ENCODE measurements at regions of chr18 and their contacts with region 1.

Region 1: DNA sequence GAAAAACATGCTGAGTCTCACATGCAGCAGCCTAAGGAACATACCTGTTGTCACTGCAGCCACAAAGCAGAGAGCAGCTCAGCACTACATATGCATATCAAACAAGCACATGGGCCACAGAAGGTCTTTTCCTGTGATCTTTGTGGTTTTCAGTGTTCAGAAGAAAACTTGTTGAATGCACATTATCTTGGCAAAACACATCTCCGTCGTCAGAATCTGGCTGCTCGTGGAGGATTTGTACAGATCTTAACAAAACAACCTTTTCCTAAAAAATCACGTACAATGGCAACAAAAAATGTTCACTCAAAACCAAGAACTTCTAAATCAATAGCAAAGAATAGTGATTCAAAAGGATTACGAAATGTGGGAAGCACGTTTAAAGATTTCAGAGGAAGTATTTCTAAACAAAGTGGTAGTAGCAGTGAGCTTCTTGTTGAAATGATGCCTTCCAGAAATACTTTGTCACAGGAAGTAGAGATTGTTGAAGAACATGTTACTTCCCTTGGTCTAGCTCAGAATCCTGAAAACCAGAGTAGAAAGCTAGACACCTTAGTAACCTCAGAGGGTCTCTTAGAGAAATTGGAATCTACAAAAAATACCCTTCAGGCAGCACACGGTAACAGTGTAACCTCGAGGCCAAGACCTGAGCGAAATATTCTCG is 34.1 kb downstream of the ZNF407 start:
- DNase-seq: no peak
- H3K4me3 ChIP-seq: no peak overlapping the region
- H3K27ac ChIP-seq: no peak overlapping the region
- H3K4me1 ChIP-seq: no peaks in the 10 kb centered on the region
- H3K27me3 ChIP-seq: no peaks in the 10 kb centered on the region
- CTCF ChIP-seq: no peak

Region 2: DNA sequence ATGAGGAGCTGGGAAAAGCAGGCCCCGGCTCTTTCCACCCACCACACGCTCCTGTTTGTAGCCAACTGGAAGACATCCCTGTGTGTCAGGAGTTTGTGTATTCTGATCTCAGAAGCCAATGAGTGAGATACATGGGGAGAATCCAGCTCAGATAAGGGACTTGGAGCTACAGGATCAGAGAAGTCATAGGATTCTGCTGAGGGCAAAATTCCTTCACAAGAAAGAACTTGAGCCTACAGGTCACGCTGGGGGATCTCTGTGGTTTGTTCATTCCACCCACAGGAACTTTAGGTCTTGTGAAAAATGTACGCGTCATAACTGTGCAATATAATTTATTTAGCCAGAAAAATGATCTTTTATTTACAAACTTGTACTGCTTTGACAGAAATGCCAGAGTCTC is 875.9 kb after region 1 on chr18:
- CTCF ChIA-PET with region 1: no interaction called
- POLR2A ChIA-PET with region 1: no interaction called
- intact Hi-C with region 1: no loop called
- DNase-seq: no peak
- H3K4me3 ChIP-seq: no peak overlapping the region
- H3K27ac ChIP-seq: no peak overlapping the region
- H3K4me1 ChIP-seq: no peaks in the 10 kb centered on the region
- H3K27me3 ChIP-seq: no peaks in the 10 kb centered on the region
- CTCF ChIP-seq: no peak

Region 3: GRCh38 chr18:76367168-76368125 is 1735.7 kb after region 1 on chr18:
- CTCF ChIA-PET with region 1: no interaction called
- POLR2A ChIA-PET with region 1: interaction called, 12 read pairs
- intact Hi-C with region 1: no loop called
- DNase-seq: no peak
- H3K4me3 ChIP-seq: no peak overlapping the region
- H3K27ac ChIP-seq: peak overlapping the region; percentile 33
- H3K4me1 ChIP-seq: peaks cover 4% of the 10 kb centered on the region
- H3K27me3 ChIP-seq: no peaks in the 10 kb centered on the region
- CTCF ChIP-seq: no peak

Measured in A673 (cell line).